Naive thymus-derived CD4-positive, alpha-beta T cell (primary cell): ENCODE measurements at regions of chr1 and their contacts with region 1.

Region 1: GRCh38 chr1:39408641-39409054 is 82.8 kb upstream of the BMP8A start:
- DNase-seq: peak; percentile 59 to 89 (median 72)
- ATAC-seq: peak; percentile 92
- H3K4me3 ChIP-seq: peak overlapping the region; percentile 54
- H3K4me3 Mint-ChIP-seq: peak overlapping the region in 8 of 10 donors; percentile 81 to 94 (median 90)
- H3K27ac ChIP-seq: peak overlapping the region; percentile 73
- H3K27ac Mint-ChIP-seq: peak overlapping the region in 2 of 9 donors; percentile 59 to 88
- H3K4me1 ChIP-seq: peaks cover 16 to 34% of the 10 kb centered on the region in 2 donors
- H3K4me1 Mint-ChIP-seq: peaks cover 36 to 69% (median 63%) of the 10 kb centered on the region in 7 donors
- H3K27me3 ChIP-seq: no peaks in the 10 kb centered on the region
- H3K27me3 Mint-ChIP-seq: no peaks in the 10 kb centered on the region

Region 2: GRCh38 chr1:39098546-39099250 is 309.9 kb before region 1 on chr1:
- CTCF ChIA-PET with region 1: interaction called, 11 read pairs
- POLR2A ChIA-PET with region 1: no interaction called
- intact Hi-C with region 1: loop called in 1 of 2 experiments (anchors 1 kb)
- DNase-seq: peak in 8 of 9 donors; percentile 42 to 75 (median 69)
- ATAC-seq: peak; percentile 89
- H3K4me3 ChIP-seq: no peak overlapping the region
- H3K4me3 Mint-ChIP-seq: no peak overlapping the region
- H3K27ac ChIP-seq: no peak overlapping the region
- H3K27ac Mint-ChIP-seq: peak overlapping the region in 5 of 9 donors; percentile 5 to 65 (median 9)
- H3K4me1 ChIP-seq: peaks cover 3 to 10% of the 10 kb centered on the region in 2 donors
- H3K4me1 Mint-ChIP-seq: peaks cover 22 to 24% (median 23%) of the 10 kb centered on the region in 7 donors
- H3K27me3 ChIP-seq: no peaks in the 10 kb centered on the region
- H3K27me3 Mint-ChIP-seq: peaks cover 0 to 3% (median 0%) of the 10 kb centered on the region in 5 donors

Region 3: GRCh38 chr1:39183503-39184353 is 224.9 kb before region 1 on chr1:
- CTCF ChIA-PET with region 1: interaction called, 9 read pairs
- POLR2A ChIA-PET with region 1: no interaction called
- intact Hi-C with region 1: loop called in 1 of 2 experiments (anchors 1 kb)
- DNase-seq: peak; percentile 38 to 94 (median 87)
- ATAC-seq: peak; percentile 97
- H3K4me3 ChIP-seq: no peak overlapping the region
- H3K4me3 Mint-ChIP-seq: peak overlapping the region in 8 of 10 donors; percentile 8 to 51 (median 39)
- H3K27ac ChIP-seq: peak overlapping the region; percentile 76
- H3K27ac Mint-ChIP-seq: peak overlapping the region; percentile 88 to 98 (median 97)
- H3K4me1 ChIP-seq: peaks cover 7 to 16% of the 10 kb centered on the region in 2 donors
- H3K4me1 Mint-ChIP-seq: peaks cover 19 to 50% (median 35%) of the 10 kb centered on the region in 7 donors
- H3K27me3 ChIP-seq: no peaks in the 10 kb centered on the region
- H3K27me3 Mint-ChIP-seq: no peaks in the 10 kb centered on the region

Region 4: GRCh38 chr1:39378377-39378776 is 30.3 kb before region 1 on chr1:
- CTCF ChIA-PET with region 1: interaction called, 26 read pairs
- POLR2A ChIA-PET with region 1: interaction called, 7 read pairs
- intact Hi-C with region 1: loop called in 1 of 2 experiments (anchors 1 kb)
- DNase-seq: peak in 1 of 9 donors; percentile 8
- ATAC-seq: peak; percentile 36
- H3K4me3 ChIP-seq: no peak overlapping the region
- H3K4me3 Mint-ChIP-seq: no peak overlapping the region
- H3K27ac ChIP-seq: no peak overlapping the region
- H3K27ac Mint-ChIP-seq: peak overlapping the region in 5 of 9 donors; percentile 21 to 81 (median 72)
- H3K4me1 ChIP-seq: no peaks in the 10 kb centered on the region
- H3K4me1 Mint-ChIP-seq: peaks cover 0 to 4% (median 0%) of the 10 kb centered on the region in 7 donors
- H3K27me3 ChIP-seq: no peaks in the 10 kb centered on the region
- H3K27me3 Mint-ChIP-seq: no peaks in the 10 kb centered on the region

Region 5: DNA sequence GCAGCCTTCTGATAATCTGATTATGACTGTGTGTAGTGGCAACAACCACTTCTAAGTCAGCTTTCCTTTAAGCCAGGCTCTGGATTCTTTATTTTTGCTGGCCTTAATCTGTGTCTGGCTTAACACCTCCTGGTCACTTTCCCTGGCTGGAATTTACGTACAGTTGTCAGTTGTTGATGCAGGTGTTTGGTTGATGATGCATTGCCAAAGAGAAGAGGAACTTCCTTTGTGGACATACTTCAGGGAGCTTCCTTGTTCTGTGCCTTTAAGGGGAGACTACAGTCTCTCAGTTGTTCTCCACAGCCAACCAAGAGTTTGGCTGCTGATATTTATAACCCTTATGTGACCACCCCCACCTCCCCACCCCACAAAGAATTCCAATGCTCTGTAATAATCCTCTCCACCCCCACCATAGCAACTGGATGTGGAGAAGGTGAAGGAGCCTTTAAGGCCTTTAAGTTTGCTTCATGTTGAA is 13.3 kb before region 1 on chr1:
- CTCF ChIA-PET with region 1: interaction called, 13 read pairs
- POLR2A ChIA-PET with region 1: interaction called, 9 read pairs
- intact Hi-C with region 1: loop called in 1 of 2 experiments (anchors 2 kb)
- DNase-seq: no peak
- ATAC-seq: no peak
- H3K4me3 ChIP-seq: no peak overlapping the region
- H3K4me3 Mint-ChIP-seq: peak overlapping the region in 1 of 10 donors; percentile 40
- H3K27ac ChIP-seq: no peak overlapping the region
- H3K27ac Mint-ChIP-seq: peak overlapping the region in 5 of 9 donors; percentile 11 to 62 (median 57)
- H3K4me1 ChIP-seq: peaks cover 23 to 42% of the 10 kb centered on the region in 2 donors
- H3K4me1 Mint-ChIP-seq: peaks cover 60 to 88% (median 84%) of the 10 kb centered on the region in 7 donors
- H3K27me3 ChIP-seq: no peaks in the 10 kb centered on the region
- H3K27me3 Mint-ChIP-seq: no peaks in the 10 kb centered on the region